Aorta (tissue), 5 donors: ENCODE measurements at regions of chr13 and their contacts with region 1.

Region 1: DNA sequence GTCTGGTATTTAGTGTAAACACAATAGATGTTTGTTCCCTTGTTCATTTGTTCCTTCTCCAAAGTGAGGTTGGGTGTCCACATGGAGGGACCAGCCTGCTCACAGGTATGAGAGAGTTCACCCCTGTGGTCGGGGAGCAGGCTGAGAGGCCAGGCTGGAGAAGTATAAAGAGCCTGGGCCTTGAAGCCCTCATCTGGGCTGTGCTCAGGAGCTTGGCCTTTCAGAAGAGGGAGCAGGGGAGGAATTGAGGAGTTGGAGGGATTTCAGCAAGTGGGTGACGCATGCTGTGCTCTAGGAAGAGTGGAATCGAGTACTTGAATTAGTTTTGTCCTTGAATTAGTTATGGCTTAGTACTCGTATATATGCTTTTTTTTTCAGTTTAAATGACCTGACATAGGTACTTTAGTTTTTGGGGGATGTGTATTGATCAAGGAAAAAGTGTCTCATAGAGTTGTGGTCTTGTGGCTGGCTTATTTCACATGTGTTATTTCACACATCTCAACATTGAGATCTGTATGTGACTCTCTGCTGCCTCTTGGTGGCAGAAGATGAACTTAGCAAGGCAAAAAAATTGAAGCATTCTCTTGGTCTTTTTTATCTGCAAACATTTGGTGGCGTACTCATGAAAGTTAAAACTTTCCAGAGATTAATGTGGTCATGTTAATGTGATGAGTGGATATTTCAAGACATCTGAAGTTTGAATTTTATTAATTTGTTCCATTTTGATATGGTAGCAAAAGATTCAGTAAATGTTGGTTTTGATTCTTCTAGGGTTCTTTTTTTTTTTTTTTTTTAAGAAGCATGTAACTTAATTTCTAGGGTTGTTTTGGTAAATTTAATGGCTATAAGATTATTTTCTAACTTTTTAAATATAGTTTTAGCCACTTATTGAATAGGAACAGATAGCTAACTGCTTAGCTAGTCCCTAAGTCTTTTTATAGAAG is 54.3 kb downstream of the SLAIN1 start:
- DNase-seq: no peak
- ATAC-seq: peak; percentile 69
- H3K4me3 ChIP-seq: no peak overlapping the region
- H3K27ac ChIP-seq: no peak overlapping the region
- H3K4me1 ChIP-seq: peaks cover 0 to 6% of the 10 kb centered on the region in 2 donors
- H3K27me3 ChIP-seq: no peaks in the 10 kb centered on the region

Region 2: GRCh38 chr13:77599351-77599750 is 152.4 kb before region 1 on chr13:
- intact Hi-C with region 1: loop called in 1 of 2 experiments (anchors 10 kb)
- DNase-seq: no peak
- ATAC-seq: no peak
- H3K4me3 ChIP-seq: no peak overlapping the region
- H3K27ac ChIP-seq: no peak overlapping the region
- H3K4me1 ChIP-seq: no peaks in the 10 kb centered on the region
- H3K27me3 ChIP-seq: no peaks in the 10 kb centered on the region

Region 3: GRCh38 chr13:78054157-78054556 is 302.4 kb after region 1 on chr13:
- intact Hi-C with region 1: no loop called
- DNase-seq: no peak
- ATAC-seq: no peak
- H3K4me3 ChIP-seq: no peak overlapping the region
- H3K27ac ChIP-seq: no peak overlapping the region
- H3K4me1 ChIP-seq: no peaks in the 10 kb centered on the region
- H3K27me3 ChIP-seq: no peaks in the 10 kb centered on the region